Endothelial cell of umbilical vein (primary cell): ENCODE measurements at regions of chr7 and their contacts with region 1.

Region 1: DNA sequence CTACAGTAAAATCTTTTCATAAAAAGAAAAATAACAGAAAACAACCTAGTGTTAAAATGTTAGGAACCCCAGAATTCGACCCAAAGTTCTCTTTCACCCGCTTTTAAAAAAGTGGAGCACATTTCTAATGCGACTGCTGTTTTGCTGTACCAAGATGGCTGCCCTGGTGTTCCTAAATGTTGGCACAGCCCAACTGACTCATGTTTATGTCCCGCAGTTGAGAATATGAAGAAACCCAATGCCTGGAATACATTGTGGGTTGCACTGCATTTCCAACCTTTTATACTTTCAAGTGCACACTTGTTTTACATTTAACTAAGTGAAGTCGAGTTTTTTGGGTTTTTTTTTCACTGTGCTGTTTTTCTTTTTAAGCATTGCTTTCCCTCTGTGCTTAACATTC is 944 bp downstream of the STEAP1B start:
- DNase-seq: no peak
- H3K4me3 ChIP-seq: peak overlapping the region in 2 of 3 experiments; percentile 40 to 43
- H3K27ac ChIP-seq: peak overlapping the region; percentile 90
- H3K4me1 ChIP-seq: peaks cover 39% of the 10 kb centered on the region
- H3K27me3 ChIP-seq: no peaks in the 10 kb centered on the region
- CTCF ChIP-seq: no peak
- POLR2A ChIP-seq: peak; percentile 43

Region 2: GRCh38 chr7:20786779-20787659 is 1712.0 kb before region 1 on chr7 and contains the start of gene SP8:
- CTCF ChIA-PET with region 1: no interaction called
- POLR2A ChIA-PET with region 1: no interaction called
- dilution Hi-C with region 1: no loop called
- intact Hi-C with region 1: loop called (anchors 10 kb)
- DNase-seq: peak; percentile 51
- H3K4me3 ChIP-seq: peak within 1 kb of the TSS; percentile 23 to 66 (median 38)
- H3K27ac ChIP-seq: no peak within 1 kb of the TSS
- H3K4me1 ChIP-seq: peaks cover 19% of the 10 kb centered on the region
- H3K27me3 ChIP-seq: peaks cover 74 to 97% of the 10 kb centered on the region in 2 experiments
- CTCF ChIP-seq: no peak
- POLR2A ChIP-seq: no peak
- total RNA-seq, gene SP8: 0.38 and 2.5 TPM in 2 replicates

Region 3: GRCh38 chr7:22469371-22470143 is 29.5 kb before region 1 on chr7:
- CTCF ChIA-PET with region 1: no interaction called
- POLR2A ChIA-PET with region 1: no interaction called
- dilution Hi-C with region 1: no loop called
- intact Hi-C with region 1: no loop called
- DNase-seq: no peak
- H3K4me3 ChIP-seq: no peak overlapping the region
- H3K27ac ChIP-seq: no peak overlapping the region
- H3K4me1 ChIP-seq: no peaks in the 10 kb centered on the region
- H3K27me3 ChIP-seq: no peaks in the 10 kb centered on the region
- CTCF ChIP-seq: no peak
- POLR2A ChIP-seq: no peak

Region 4: DNA sequence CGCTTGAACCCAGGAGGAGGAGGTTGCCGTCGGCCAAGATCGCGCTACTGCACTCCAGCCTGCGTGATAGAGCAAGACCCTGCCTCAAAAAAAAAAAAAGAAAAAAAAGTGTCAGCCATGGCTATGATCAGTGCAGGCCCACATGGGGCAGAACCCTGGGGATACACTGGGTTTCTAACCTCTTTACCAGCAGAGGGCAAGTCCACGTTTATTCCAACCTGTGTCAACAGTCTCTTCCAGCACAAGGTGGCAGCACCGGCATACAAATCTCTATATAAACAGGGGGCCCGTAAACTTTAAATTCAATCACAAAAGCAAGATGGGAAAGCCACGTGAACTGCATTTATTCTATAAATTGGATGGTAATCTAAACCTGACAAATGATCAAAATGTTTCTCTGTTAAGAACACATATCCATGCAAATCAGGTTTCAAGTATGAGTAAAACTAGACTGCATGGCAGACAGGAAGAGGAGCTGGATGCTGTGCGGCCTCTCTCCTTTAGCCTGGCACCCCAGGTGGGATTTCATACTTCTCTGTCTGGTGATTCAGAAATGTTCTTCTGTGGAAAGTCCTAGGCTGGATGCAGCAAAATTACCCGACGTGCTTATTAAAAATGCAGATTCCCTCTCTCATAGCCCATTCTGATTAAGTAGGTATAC is 60.9 kb after region 1 on chr7:
- CTCF ChIA-PET with region 1: no interaction called
- POLR2A ChIA-PET with region 1: no interaction called
- dilution Hi-C with region 1: no loop called
- intact Hi-C with region 1: no loop called
- DNase-seq: peak; percentile 85
- H3K4me3 ChIP-seq: no peak overlapping the region
- H3K27ac ChIP-seq: peak overlapping the region; percentile 99
- H3K4me1 ChIP-seq: peaks cover 48% of the 10 kb centered on the region
- H3K27me3 ChIP-seq: peaks cover 0 to under 1% of the 10 kb centered on the region in 2 experiments
- CTCF ChIP-seq: peak; percentile 76 to 87
- POLR2A ChIP-seq: no peak